IMR-90 (cell line): ENCODE measurements at regions of chr1 and their contacts with region 1.

Region 1: DNA sequence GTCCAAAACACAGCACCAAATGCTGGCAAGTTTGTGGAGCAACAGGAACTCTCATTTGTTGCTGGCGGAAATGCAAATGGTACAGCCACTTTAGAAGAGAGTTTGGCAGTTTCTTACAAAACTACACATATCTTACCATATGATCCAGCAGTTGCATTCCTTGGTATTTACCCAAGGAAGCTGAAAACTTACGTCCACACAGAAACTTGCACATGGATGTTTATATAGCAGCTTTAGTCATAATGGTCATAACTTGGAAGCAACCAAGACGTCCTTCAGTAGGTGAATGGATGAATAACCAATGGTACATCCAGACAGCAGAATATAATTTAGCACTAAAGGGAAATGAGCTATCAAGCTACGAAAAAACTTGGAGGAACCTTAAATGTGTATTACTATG is 66.4 kb downstream of the MARK1 start:
- DNase-seq: peak; percentile 33
- ATAC-seq: no peak
- H3K4me3 ChIP-seq: no peak overlapping the region
- H3K27ac ChIP-seq: no peak overlapping the region
- H3K4me1 ChIP-seq: no peaks in the 10 kb centered on the region
- H3K27me3 ChIP-seq: no peaks in the 10 kb centered on the region
- CTCF ChIP-seq: no peak
- POLR2A ChIP-seq: no peak
- RAD21 ChIP-seq: no peak

Region 2: GRCh38 chr1:220454155-220454777 is 140.1 kb before region 1 on chr1:
- CTCF ChIA-PET with region 1: no interaction called
- POLR2A ChIA-PET with region 1: no interaction called
- dilution Hi-C with region 1: no loop called
- in situ Hi-C with region 1: no loop called
- intact Hi-C with region 1: no loop called
- DNase-seq: no peak
- ATAC-seq: no peak
- H3K4me3 ChIP-seq: no peak overlapping the region
- H3K27ac ChIP-seq: no peak overlapping the region
- H3K4me1 ChIP-seq: no peaks in the 10 kb centered on the region
- H3K27me3 ChIP-seq: no peaks in the 10 kb centered on the region
- CTCF ChIP-seq: no peak; the same call in 1 of the 2 replicates
- POLR2A ChIP-seq: no peak
- RAD21 ChIP-seq: no peak

Region 3: DNA sequence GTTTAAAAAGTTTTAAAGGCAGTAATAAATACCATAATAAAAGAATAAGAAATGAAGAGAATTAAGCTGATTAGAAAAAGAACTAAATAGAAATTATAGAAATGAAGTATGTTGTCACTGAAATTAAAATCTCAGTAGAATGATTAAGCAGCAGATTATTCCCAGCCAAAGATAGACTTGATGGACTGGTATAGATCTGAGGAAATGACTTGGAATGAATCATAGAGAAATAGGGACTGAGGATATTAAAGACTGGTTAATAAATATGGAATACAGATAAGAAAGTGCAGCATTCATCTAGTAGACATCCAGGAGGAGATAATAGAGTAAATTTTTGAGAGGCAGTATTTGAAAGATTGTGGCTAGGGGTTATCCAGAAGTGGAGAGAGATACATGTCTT is 37.7 kb before region 1 on chr1:
- CTCF ChIA-PET with region 1: no interaction called
- POLR2A ChIA-PET with region 1: no interaction called
- dilution Hi-C with region 1: no loop called
- in situ Hi-C with region 1: no loop called
- intact Hi-C with region 1: loop called (anchors 1 kb)
- DNase-seq: no peak
- ATAC-seq: no peak
- H3K4me3 ChIP-seq: no peak overlapping the region
- H3K27ac ChIP-seq: no peak overlapping the region
- H3K4me1 ChIP-seq: no peaks in the 10 kb centered on the region
- H3K27me3 ChIP-seq: no peaks in the 10 kb centered on the region
- CTCF ChIP-seq: no peak
- POLR2A ChIP-seq: no peak
- RAD21 ChIP-seq: no peak

Region 4: DNA sequence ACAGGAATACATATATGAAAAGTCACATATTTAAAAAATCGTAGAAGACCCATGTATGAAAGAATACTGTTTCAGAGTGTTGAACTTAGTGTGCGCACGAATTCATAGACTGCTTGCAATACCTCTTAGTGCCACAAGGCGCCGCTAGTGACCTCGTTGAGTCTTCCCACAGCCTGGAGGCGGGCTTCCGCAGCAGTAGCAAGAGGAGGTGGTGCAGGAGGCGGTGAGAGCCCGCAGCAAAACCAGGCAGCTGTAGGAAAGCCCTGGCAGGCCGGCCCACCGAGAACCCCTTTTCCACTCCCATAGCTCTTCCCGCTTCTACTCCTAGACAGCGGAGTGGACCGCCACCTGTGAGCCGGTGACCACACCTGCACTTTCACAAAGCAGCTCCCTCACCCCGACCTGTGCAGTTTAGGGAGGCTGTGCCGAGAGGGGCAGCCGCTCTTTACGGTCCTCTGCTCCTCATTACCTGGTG is 215.9 kb after region 1 on chr1:
- CTCF ChIA-PET with region 1: no interaction called
- POLR2A ChIA-PET with region 1: no interaction called
- dilution Hi-C with region 1: no loop called
- in situ Hi-C with region 1: no loop called
- intact Hi-C with region 1: no loop called
- DNase-seq: peak; percentile 78
- ATAC-seq: peak; percentile 99
- H3K4me3 ChIP-seq: no peak overlapping the region
- H3K27ac ChIP-seq: no peak overlapping the region
- H3K4me1 ChIP-seq: peaks cover under 1% of the 10 kb centered on the region; the same call in 1 of the 2 replicates
- H3K27me3 ChIP-seq: peaks cover 6% of the 10 kb centered on the region; the same call in 1 of the 2 replicates
- CTCF ChIP-seq: peak; percentile 91
- POLR2A ChIP-seq: no peak
- RAD21 ChIP-seq: peak; percentile 78